IMR-90 (cell line): ENCODE measurements at regions of chr3 and their contacts with region 1.

Region 1: DNA sequence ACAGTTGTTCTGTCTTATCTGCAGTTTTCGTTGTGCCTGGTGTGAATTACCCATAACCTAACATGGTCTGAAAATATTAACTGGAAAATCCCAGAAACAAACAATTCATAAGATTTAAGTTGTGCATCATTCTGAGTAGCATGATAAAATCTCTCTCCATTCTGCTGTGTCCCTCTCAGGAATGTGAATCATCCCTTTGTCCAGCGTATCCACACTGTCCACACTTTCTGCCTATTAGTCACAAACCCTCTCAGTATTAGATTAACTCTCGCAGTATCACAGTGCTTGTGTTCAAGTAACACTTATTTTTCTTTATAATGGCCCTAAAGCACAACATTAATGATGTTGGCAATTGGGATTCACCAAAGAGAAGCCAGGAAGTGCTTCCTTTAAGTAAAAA is 203.2 kb downstream of the CGGBP1 start:
- DNase-seq: no peak
- ATAC-seq: no peak
- H3K4me3 ChIP-seq: no peak overlapping the region
- H3K27ac ChIP-seq: no peak overlapping the region
- H3K4me1 ChIP-seq: no peaks in the 10 kb centered on the region
- H3K27me3 ChIP-seq: no peaks in the 10 kb centered on the region
- CTCF ChIP-seq: no peak
- POLR2A ChIP-seq: no peak
- RAD21 ChIP-seq: no peak

Region 2: GRCh38 chr3:87607234-87607633 is 248.4 kb before region 1 on chr3:
- CTCF ChIA-PET with region 1: no interaction called
- POLR2A ChIA-PET with region 1: no interaction called
- dilution Hi-C with region 1: no loop called
- in situ Hi-C with region 1: no loop called
- intact Hi-C with region 1: no loop called
- DNase-seq: no peak
- ATAC-seq: no peak
- H3K4me3 ChIP-seq: no peak overlapping the region
- H3K27ac ChIP-seq: no peak overlapping the region
- H3K4me1 ChIP-seq: no peaks in the 10 kb centered on the region
- H3K27me3 ChIP-seq: no peaks in the 10 kb centered on the region
- CTCF ChIP-seq: no peak
- POLR2A ChIP-seq: no peak
- RAD21 ChIP-seq: no peak

Region 3: GRCh38 chr3:87837076-87837475 is 18.5 kb before region 1 on chr3:
- CTCF ChIA-PET with region 1: no interaction called
- POLR2A ChIA-PET with region 1: no interaction called
- dilution Hi-C with region 1: no loop called
- in situ Hi-C with region 1: no loop called
- intact Hi-C with region 1: loop called (anchors 1 kb)
- DNase-seq: no peak
- ATAC-seq: no peak
- H3K4me3 ChIP-seq: no peak overlapping the region
- H3K27ac ChIP-seq: no peak overlapping the region
- H3K4me1 ChIP-seq: no peaks in the 10 kb centered on the region
- H3K27me3 ChIP-seq: no peaks in the 10 kb centered on the region
- CTCF ChIP-seq: no peak
- POLR2A ChIP-seq: no peak
- RAD21 ChIP-seq: no peak

Region 4: DNA sequence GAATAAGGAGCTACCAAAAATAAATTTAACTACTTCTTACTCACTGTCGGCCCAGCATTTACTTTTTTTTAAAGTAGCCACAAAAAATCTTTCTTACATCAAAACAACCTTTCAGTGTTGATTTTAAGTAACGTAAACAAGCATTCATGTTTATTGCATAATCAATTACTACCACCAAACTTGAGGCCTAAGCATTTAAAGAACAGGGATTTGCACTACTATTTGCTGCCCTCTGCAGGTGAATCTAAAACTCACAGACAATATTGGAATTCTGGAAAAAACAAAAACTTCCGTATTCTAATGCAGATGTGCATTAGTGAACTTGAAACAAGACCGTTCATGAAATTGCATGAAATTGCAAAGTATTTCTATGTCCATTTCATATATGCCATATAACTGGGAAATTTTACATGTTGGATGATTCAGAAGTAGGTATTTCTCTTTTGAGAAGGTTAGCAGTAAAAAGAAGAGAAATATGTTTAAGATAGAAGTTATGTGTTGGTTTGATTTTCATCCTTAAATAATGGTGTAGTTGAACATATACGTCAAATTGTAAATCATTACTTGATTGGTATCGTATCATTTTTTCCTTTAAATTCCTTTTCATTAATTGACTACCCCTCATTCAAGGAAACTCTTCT is 147.6 kb after region 1 on chr3:
- CTCF ChIA-PET with region 1: no interaction called
- POLR2A ChIA-PET with region 1: no interaction called
- dilution Hi-C with region 1: no loop called
- in situ Hi-C with region 1: no loop called
- intact Hi-C with region 1: no loop called
- DNase-seq: peak; percentile 49
- ATAC-seq: peak; percentile 53
- H3K4me3 ChIP-seq: no peak overlapping the region
- H3K27ac ChIP-seq: no peak overlapping the region
- H3K4me1 ChIP-seq: no peaks in the 10 kb centered on the region
- H3K27me3 ChIP-seq: peaks cover 5% of the 10 kb centered on the region
- CTCF ChIP-seq: peak; percentile 75
- POLR2A ChIP-seq: no peak
- RAD21 ChIP-seq: peak; percentile 68

Region 5: GRCh38 chr3:88113311-88114162 is 257.9 kb after region 1 on chr3:
- CTCF ChIA-PET with region 1: no interaction called
- POLR2A ChIA-PET with region 1: no interaction called
- dilution Hi-C with region 1: no loop called
- in situ Hi-C with region 1: no loop called
- intact Hi-C with region 1: no loop called
- DNase-seq: peak; percentile 70
- ATAC-seq: peak; percentile 96
- H3K4me3 ChIP-seq: no peak overlapping the region
- H3K27ac ChIP-seq: no peak overlapping the region
- H3K4me1 ChIP-seq: no peaks in the 10 kb centered on the region
- H3K27me3 ChIP-seq: no peaks in the 10 kb centered on the region
- CTCF ChIP-seq: peak; percentile 74
- POLR2A ChIP-seq: no peak
- RAD21 ChIP-seq: peak; percentile 69